Right cardiac atrium (tissue), 5 donors: ENCODE measurements at regions of chr13 and their contacts with region 1.

Region 1: GRCh38 chr13:108895220-108895704 is 265.9 kb downstream of the MYO16 start:
- DNase-seq: no peak
- ATAC-seq: no peak
- H3K4me3 ChIP-seq: no peak overlapping the region
- H3K27ac ChIP-seq: no peak overlapping the region
- H3K4me1 ChIP-seq: no peaks in the 10 kb centered on the region
- H3K27me3 ChIP-seq: no peaks in the 10 kb centered on the region

Region 2: GRCh38 chr13:108322206-108322824 is 572.9 kb before region 1 on chr13:
- intact Hi-C with region 1: loop called in 3 of 4 experiments (anchors 5 to 10 kb)
- DNase-seq: no peak
- ATAC-seq: peak; percentile 70 to 77
- H3K4me3 ChIP-seq: no peak overlapping the region
- H3K27ac ChIP-seq: no peak overlapping the region
- H3K4me1 ChIP-seq: no peaks in the 10 kb centered on the region
- H3K27me3 ChIP-seq: no peaks in the 10 kb centered on the region

Region 3: GRCh38 chr13:108342369-108343289 is 552.6 kb before region 1 on chr13:
- intact Hi-C with region 1: loop called in 1 of 4 experiments (anchors 10 kb)
- DNase-seq: no peak
- ATAC-seq: peak; percentile 44 to 56
- H3K4me3 ChIP-seq: no peak overlapping the region
- H3K27ac ChIP-seq: no peak overlapping the region
- H3K4me1 ChIP-seq: no peaks in the 10 kb centered on the region
- H3K27me3 ChIP-seq: no peaks in the 10 kb centered on the region

Region 4: DNA sequence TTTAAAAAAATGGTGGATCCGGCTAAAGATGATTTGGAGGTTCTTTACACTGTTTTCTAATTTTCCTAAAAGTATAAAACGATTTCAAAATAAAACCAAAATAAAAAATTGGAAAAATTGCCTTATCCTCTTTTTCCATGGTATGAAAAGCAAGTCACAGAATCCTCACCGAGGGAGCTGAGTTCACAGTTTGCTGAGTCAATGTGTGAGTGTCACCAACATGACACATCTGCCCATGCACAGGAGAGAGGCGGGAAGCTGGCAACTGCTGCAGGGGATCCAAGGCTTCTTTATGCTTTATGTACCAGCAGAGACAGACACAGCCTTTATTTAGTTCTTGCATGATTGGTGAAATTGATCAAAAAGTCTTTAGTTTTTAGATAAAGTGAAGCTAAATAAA is 467.9 kb before region 1 on chr13:
- intact Hi-C with region 1: no loop called
- DNase-seq: no peak
- ATAC-seq: no peak
- H3K4me3 ChIP-seq: no peak overlapping the region
- H3K27ac ChIP-seq: no peak overlapping the region
- H3K4me1 ChIP-seq: no peaks in the 10 kb centered on the region
- H3K27me3 ChIP-seq: no peaks in the 10 kb centered on the region

Region 5: DNA sequence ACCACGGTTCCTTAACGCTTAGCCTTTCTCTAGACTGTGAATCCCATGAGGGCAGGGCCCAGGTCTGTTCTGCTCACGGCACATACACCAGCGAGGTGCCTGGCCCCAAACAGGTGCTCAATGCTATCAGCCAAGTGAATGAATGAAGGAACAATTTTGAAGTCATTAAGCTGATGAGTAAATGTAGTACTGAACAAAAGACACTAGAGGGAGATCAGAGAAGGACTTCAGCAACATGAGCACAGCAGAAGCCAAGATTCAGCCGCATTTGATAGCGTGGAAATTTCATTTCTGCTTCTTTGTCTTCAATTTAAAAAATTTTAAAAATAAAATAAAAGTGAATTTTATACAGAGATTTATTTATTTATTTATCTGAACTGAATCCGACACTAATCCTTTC is 285.9 kb before region 1 on chr13:
- intact Hi-C with region 1: loop called (anchors 5 to 10 kb)
- DNase-seq: no peak
- ATAC-seq: peak in 1 of 2 donors; percentile 40
- H3K4me3 ChIP-seq: no peak overlapping the region
- H3K27ac ChIP-seq: no peak overlapping the region
- H3K4me1 ChIP-seq: no peaks in the 10 kb centered on the region
- H3K27me3 ChIP-seq: no peaks in the 10 kb centered on the region